ENCODE measurements at regions of chr22 and their contacts with region 1.

Region 1: DNA sequence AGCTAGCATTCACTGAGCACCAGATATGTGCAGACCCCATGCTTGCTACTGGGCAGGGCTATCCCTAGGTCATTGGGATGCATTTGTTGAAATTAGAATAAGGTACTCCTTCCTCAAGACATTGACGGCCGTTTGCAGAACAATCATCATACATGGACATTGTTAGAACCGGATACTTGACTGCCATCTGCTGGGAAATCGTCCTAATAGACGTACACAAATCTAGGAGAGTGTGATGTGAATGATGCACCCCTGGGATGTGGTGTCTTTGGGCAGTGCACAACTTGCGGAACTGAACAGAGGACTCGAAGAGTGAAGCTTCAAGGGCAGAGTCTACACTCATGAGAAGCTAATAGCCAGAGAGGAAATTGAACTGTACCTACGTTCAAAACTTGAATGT is 35.9 kb downstream of the MYO18B start:
- DNase-seq: peak; percentile 44
- ATAC-seq: peak; percentile 88
- H3K4me3 ChIP-seq: no peak overlapping the region
- H3K27ac ChIP-seq: no peak overlapping the region
- H3K4me1 ChIP-seq: no peaks in the 10 kb centered on the region
- H3K27me3 ChIP-seq: no peaks in the 10 kb centered on the region
- CTCF ChIP-seq: peak; percentile 32 to 62 (median 53); a peak in 5 of 6 replicates
- POLR2A ChIP-seq: no peak
- RAD21 ChIP-seq: peak; percentile 47; the same call in 1 of the 2 replicates

Region 2: DNA sequence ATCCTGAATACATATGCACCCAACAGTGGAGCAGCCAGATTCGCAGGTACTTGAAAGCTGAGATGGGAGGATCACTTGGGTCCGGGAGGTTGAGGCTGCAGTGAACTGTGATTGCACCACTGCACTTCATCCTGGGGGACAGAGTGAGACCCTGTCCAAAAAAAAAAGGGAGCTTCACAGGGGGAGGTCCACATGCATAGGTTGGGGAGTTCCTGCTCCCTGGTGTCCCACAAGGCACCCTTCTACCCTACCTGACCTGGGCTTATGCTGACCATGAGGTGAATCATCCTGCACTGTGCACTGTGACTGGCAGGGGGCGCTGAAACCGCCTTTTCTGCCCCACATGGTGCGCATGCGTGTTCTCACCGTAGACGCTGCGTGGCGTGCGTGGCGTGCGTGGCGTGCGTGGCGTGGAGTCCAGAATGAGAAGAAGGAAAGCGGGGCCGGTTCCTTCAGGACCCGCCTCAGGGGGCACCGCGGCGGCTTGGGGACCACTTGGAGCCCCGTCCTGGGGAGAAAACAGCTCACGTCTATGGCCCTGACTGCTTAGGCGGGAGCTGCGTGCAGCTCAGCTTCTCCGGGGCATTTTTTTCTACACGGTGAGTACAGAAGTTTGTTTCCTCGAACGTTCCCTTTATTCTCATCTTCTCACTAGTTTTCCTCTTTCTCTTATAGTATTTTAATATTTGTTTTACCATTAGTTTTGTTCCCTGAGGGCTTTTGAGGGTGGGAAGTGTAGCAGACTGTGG is 330.0 kb before region 1 on chr22:
- CTCF ChIA-PET with region 1: no interaction called
- POLR2A ChIA-PET with region 1: no interaction called
- RAD21 ChIA-PET with region 1: no interaction called
- intact Hi-C with region 1: loop called (anchors 5 kb)
- DNase-seq: peak; percentile 71
- ATAC-seq: peak; percentile 96
- H3K4me3 ChIP-seq: peak overlapping the region; percentile 82 to 94
- H3K27ac ChIP-seq: peak overlapping the region; percentile 65
- H3K4me1 ChIP-seq: peaks cover 8 to 12% of the 10 kb centered on the region in 2 experiments; a peak in 3 of 4 replicates
- H3K27me3 ChIP-seq: no peaks in the 10 kb centered on the region
- CTCF ChIP-seq: peak; percentile 52 to 94 (median 85); a peak in 5 of 6 replicates
- POLR2A ChIP-seq: peak; percentile 78
- RAD21 ChIP-seq: peak; percentile 35; the same call in 1 of the 2 replicates

Region 3: GRCh38 chr22:25747245-25747944 is 30.5 kb before region 1 on chr22:
- CTCF ChIA-PET with region 1: no interaction called
- POLR2A ChIA-PET with region 1: no interaction called
- RAD21 ChIA-PET with region 1: no interaction called
- intact Hi-C with region 1: no loop called
- DNase-seq: peak; percentile 45
- ATAC-seq: peak; percentile 77
- H3K4me3 ChIP-seq: 0 out of 4 replicates have a peak overlapping the region, but pooled peaks of 1 of the 2 experiments have one; percentile 5
- H3K27ac ChIP-seq: no peak overlapping the region; the same call in 1 of the 2 replicates
- H3K4me1 ChIP-seq: peaks cover 12 to 24% of the 10 kb centered on the region in 2 experiments
- H3K27me3 ChIP-seq: no peaks in the 10 kb centered on the region
- CTCF ChIP-seq: no peak
- POLR2A ChIP-seq: no peak
- RAD21 ChIP-seq: no peak

Region 4: GRCh38 chr22:25880524-25880923 is 102.7 kb after region 1 on chr22:
- CTCF ChIA-PET with region 1: no interaction called
- POLR2A ChIA-PET with region 1: no interaction called
- RAD21 ChIA-PET with region 1: no interaction called
- intact Hi-C with region 1: no loop called
- DNase-seq: no peak
- ATAC-seq: peak; percentile 72
- H3K4me3 ChIP-seq: no peak overlapping the region
- H3K27ac ChIP-seq: no peak overlapping the region
- H3K4me1 ChIP-seq: no peaks in the 10 kb centered on the region
- H3K27me3 ChIP-seq: peaks cover 60% of the 10 kb centered on the region
- CTCF ChIP-seq: peak in 2 of 3 experiments; percentile 36 to 49; a peak in 4 of 6 replicates
- POLR2A ChIP-seq: no peak
- RAD21 ChIP-seq: no peak

Measured in HCT116 (cell line).